Endothelial cell of umbilical vein (primary cell): ENCODE measurements at regions of chr6 and their contacts with region 1.

Region 1: DNA sequence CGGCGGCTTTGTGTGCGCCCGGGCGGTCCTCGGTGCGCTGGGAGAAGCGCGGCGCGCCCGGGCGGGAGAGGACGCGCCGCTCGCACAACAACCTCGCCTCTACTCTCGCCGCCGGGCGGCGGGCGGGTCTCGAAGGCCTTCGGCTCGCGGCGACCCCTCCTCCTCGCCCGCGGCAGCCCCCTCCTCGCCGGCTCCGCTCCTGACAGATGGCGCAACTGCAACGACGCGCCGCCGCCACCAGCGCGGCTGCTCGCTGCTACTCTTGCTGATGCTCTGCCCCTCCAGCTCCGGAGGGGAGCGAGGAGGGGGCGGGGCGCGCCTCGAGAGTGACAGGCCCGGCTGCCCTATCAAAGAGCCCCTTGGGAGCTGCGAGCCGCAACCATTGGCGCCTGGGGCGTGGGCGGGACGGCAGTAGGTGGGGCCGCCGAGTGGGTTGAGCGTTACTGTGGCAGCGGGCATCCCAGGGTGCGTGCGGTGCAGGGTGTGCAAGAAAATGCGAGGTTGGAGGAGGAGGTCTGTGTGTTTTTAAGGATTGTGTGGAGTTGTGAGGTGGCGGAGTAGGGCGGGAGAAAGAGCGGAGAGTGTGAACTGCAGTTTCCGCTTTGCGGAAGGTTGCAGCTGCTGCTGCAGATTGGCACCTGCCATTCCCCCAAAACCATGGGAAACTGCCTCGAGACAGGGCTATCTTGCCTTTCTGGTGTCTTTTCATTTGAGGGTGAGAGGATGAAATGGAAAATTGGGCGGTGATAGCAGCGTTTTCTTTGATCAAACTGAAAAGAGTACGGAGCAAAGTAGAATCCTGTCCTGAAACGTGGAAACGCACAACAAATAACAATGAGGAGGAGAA is at the start of gene FYN:
- DNase-seq: peak; percentile 99
- H3K4me3 ChIP-seq: peak within 1 kb of the TSS; percentile 76 to 96 (median 85)
- H3K27ac ChIP-seq: peak within 1 kb of the TSS; percentile 59
- H3K4me1 ChIP-seq: peaks cover 30% of the 10 kb centered on the region
- H3K27me3 ChIP-seq: no peaks in the 10 kb centered on the region
- CTCF ChIP-seq: peak in 1 of 2 donors; percentile 53
- POLR2A ChIP-seq: peak; percentile 62
- total RNA-seq, gene FYN: 143 and 151 TPM in 2 replicates

Region 2: DNA sequence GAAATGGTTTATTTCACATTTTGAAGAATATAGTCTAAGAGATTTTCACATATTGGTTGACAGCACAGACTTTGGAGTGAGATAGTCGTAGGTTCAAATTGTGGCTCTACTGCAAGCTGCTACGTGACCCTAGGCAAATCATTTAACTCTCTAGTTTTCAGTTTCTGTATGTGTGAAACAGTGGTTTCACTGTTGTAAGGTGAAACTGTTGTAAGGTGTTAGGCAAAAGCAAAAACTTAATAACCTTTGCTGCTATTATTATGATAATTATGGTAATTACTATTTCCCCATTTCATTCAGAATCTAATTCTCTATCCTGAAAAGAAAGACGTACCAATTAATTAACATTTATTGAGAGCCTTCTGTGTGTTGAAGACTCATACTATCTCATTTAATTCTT is 534.6 kb before region 1 on chr6:
- CTCF ChIA-PET with region 1: no interaction called
- POLR2A ChIA-PET with region 1: no interaction called
- dilution Hi-C with region 1: no loop called
- intact Hi-C with region 1: no loop called
- DNase-seq: no peak
- H3K4me3 ChIP-seq: no peak overlapping the region
- H3K27ac ChIP-seq: no peak overlapping the region
- H3K4me1 ChIP-seq: no peaks in the 10 kb centered on the region
- H3K27me3 ChIP-seq: no peaks in the 10 kb centered on the region
- CTCF ChIP-seq: no peak
- POLR2A ChIP-seq: no peak

Region 3: GRCh38 chr6:111483736-111484632 is 389.4 kb before region 1 on chr6:
- CTCF ChIA-PET with region 1: interaction called, 4 read pairs
- POLR2A ChIA-PET with region 1: no interaction called
- dilution Hi-C with region 1: no loop called
- intact Hi-C with region 1: loop called (anchors 5 kb)
- DNase-seq: peak; percentile 96
- H3K4me3 ChIP-seq: peak overlapping the region; percentile 62 to 85 (median 67)
- H3K27ac ChIP-seq: peak overlapping the region; percentile 97
- H3K4me1 ChIP-seq: peaks cover 24% of the 10 kb centered on the region
- H3K27me3 ChIP-seq: no peaks in the 10 kb centered on the region
- CTCF ChIP-seq: no peak
- POLR2A ChIP-seq: peak; percentile 93

Region 4: GRCh38 chr6:111692327-111693164 is 180.9 kb before region 1 on chr6:
- CTCF ChIA-PET with region 1: no interaction called
- POLR2A ChIA-PET with region 1: no interaction called
- dilution Hi-C with region 1: no loop called
- intact Hi-C with region 1: no loop called
- DNase-seq: no peak
- H3K4me3 ChIP-seq: no peak overlapping the region
- H3K27ac ChIP-seq: no peak overlapping the region
- H3K4me1 ChIP-seq: peaks cover 8% of the 10 kb centered on the region
- H3K27me3 ChIP-seq: no peaks in the 10 kb centered on the region
- CTCF ChIP-seq: no peak
- POLR2A ChIP-seq: no peak

Region 5: GRCh38 chr6:111750753-111751684 is 122.4 kb before region 1 on chr6:
- CTCF ChIA-PET with region 1: interaction called, 4 read pairs
- POLR2A ChIA-PET with region 1: no interaction called
- dilution Hi-C with region 1: no loop called
- intact Hi-C with region 1: loop called (anchors 2 kb)
- DNase-seq: peak; percentile 83
- H3K4me3 ChIP-seq: no peak overlapping the region
- H3K27ac ChIP-seq: peak overlapping the region; percentile 75
- H3K4me1 ChIP-seq: peaks cover 83% of the 10 kb centered on the region
- H3K27me3 ChIP-seq: no peaks in the 10 kb centered on the region
- CTCF ChIP-seq: no peak
- POLR2A ChIP-seq: no peak

Region 6: DNA sequence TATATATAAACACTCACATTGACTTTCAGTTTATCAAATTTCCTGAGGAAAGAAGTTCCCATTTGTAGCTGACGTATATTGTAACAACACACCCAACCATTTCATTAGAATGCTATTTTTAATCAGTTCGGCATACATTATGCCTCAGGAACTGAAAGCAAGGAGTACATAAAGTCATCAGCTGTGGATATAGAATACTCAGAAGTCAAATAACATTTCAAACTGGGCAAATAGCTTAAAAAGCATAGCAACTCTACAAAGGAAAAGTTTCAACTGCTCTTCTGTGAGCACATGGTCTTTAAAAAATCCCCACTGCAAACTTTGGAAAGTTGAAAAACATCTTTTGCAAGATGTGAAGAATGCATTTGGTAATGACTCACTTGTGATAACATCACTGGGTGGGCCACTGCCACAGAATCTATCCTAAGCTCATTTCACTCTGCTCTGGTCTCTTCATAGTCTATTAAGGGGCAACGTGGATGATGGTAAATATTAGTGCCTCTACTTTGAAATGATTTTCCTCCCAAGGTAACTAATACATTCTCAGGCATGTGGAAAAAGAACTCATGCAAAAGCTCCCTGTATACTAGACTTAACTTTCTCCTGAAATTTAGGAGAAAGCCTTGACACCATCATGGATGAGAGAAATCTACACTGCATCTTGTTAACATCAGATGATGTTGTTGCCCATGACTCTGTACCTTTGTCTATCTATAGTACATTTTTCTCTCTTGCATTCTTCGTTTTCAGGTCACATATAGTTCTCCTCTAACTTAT is 49.4 kb before region 1 on chr6:
- CTCF ChIA-PET with region 1: interaction called, 3 read pairs
- POLR2A ChIA-PET with region 1: no interaction called
- dilution Hi-C with region 1: no loop called
- intact Hi-C with region 1: loop called (anchors 2 kb)
- DNase-seq: peak; percentile 88
- H3K4me3 ChIP-seq: peak overlapping the region in 1 of 3 experiments; percentile 58
- H3K27ac ChIP-seq: peak overlapping the region; percentile 81
- H3K4me1 ChIP-seq: peaks cover 25% of the 10 kb centered on the region
- H3K27me3 ChIP-seq: no peaks in the 10 kb centered on the region
- CTCF ChIP-seq: no peak
- POLR2A ChIP-seq: no peak

Region 7: GRCh38 chr6:111894272-111894671 is 20.9 kb after region 1 on chr6:
- CTCF ChIA-PET with region 1: interaction called, 12 read pairs
- POLR2A ChIA-PET with region 1: no interaction called
- dilution Hi-C with region 1: no loop called
- intact Hi-C with region 1: loop called (anchors 2 kb)
- DNase-seq: peak; percentile 55
- H3K4me3 ChIP-seq: no peak overlapping the region
- H3K27ac ChIP-seq: peak overlapping the region; percentile 49
- H3K4me1 ChIP-seq: peaks cover 29% of the 10 kb centered on the region
- H3K27me3 ChIP-seq: no peaks in the 10 kb centered on the region
- CTCF ChIP-seq: no peak
- POLR2A ChIP-seq: no peak

Region 8: DNA sequence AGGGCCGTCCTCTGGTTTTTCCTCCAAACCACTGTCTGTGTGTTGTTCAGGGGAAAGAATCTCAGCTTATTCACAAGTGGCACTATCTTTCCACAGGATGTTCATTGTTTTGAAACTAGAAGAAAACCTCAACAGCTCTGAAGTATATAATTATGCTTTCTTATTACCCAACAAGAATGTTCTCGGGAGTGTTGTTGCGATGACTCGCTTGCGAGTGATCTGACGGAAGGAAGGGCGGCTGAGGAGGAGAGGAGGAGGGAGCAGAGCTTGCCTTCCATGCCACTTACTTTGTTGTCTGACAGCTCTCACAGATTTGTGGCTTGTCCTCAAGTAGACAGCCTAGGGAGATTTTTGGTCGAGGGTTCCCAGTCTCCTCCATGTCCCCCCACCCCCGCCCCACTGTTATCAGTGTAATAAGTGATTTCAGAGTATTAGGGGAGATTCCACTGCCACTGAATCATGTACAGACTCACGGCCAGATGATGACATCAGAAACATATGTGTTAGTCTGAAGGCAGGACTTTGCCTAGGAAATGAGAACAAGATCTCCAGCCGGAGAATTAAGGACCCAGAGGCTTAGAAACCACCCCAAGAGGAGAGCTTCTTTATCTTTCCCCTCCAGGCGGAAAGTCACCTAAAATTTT is 99.8 kb after region 1 on chr6:
- CTCF ChIA-PET with region 1: interaction called, 7 read pairs
- POLR2A ChIA-PET with region 1: no interaction called
- dilution Hi-C with region 1: no loop called
- intact Hi-C with region 1: loop called (anchors 2 kb)
- DNase-seq: peak; percentile 90
- H3K4me3 ChIP-seq: peak overlapping the region in 2 of 3 experiments; percentile 4 to 9
- H3K27ac ChIP-seq: peak overlapping the region; percentile 93
- H3K4me1 ChIP-seq: peaks cover 24% of the 10 kb centered on the region
- H3K27me3 ChIP-seq: no peaks in the 10 kb centered on the region
- CTCF ChIP-seq: no peak
- POLR2A ChIP-seq: peak; percentile 55